Dendritic cell treated with granulocyte-macrophage colony-stimulating factor and Interleukin-4, amounts not matched to agents 40 ng/mL and 50 ng/mL, for 4 days (primary cell): ENCODE measurements at regions of chr4 and their contacts with region 1.

Region 1: GRCh38 chr4:95165926-95166524 is 382.7 kb downstream of the UNC5C start:
- H3K4me3 Mint-ChIP-seq: no peak overlapping the region
- H3K27ac Mint-ChIP-seq: no peak overlapping the region
- H3K4me1 Mint-ChIP-seq: no peaks in the 10 kb centered on the region
- H3K27me3 Mint-ChIP-seq: no peaks in the 10 kb centered on the region

Region 2: GRCh38 chr4:95510145-95510544 is 344.1 kb after region 1 on chr4:
- intact Hi-C with region 1: loop called (anchors 5 kb)
- H3K4me3 Mint-ChIP-seq: no peak overlapping the region
- H3K27ac Mint-ChIP-seq: no peak overlapping the region
- H3K4me1 Mint-ChIP-seq: no peaks in the 10 kb centered on the region
- H3K27me3 Mint-ChIP-seq: no peaks in the 10 kb centered on the region

Region 3: DNA sequence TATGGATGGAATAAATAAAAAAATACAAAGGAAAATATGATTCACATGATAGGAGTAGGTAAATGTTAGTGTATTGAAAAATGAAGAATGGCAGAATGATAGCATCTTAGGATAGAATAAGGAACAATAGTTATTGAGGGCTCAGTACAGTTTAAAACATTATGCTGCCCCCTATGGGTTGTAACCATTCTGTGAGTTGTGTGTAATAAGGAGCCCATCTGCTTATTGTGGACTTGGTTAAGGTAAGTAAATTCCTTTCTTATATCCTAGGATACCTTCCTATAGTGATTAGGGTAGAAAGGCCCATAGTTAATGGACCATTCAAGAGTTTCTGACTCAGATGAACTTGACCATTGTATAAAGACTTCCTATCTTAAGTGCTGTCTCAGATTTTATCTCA is 869.7 kb after region 1 on chr4:
- intact Hi-C with region 1: loop called (anchors 10 kb)
- H3K4me3 Mint-ChIP-seq: no peak overlapping the region
- H3K27ac Mint-ChIP-seq: no peak overlapping the region
- H3K4me1 Mint-ChIP-seq: no peaks in the 10 kb centered on the region
- H3K27me3 Mint-ChIP-seq: no peaks in the 10 kb centered on the region